Posterior vena cava (tissue), 2 donors: ENCODE measurements at regions of chr20 and their contacts with region 1.

Region 1: DNA sequence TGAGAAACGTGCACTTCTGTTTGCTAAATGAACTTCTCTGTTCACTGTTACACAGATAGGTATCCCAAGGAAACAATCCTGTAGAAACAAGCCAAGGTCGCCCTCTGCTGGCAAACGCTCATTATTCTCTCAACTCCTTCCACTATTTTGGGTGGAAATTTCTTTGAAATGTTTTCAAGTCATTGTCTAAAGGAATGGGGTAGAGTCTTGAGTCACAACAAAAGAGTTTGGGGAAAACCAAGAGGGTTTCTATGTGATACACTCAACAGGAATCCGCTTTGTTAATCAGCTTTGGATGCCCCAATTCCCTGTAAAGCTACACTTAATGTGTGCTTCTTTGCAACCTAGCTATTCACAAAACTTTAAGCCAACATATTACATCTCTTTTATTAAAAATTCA is 4.6 kb upstream of the RAE1 start:
- DNase-seq: peak; percentile 93

Region 2: DNA sequence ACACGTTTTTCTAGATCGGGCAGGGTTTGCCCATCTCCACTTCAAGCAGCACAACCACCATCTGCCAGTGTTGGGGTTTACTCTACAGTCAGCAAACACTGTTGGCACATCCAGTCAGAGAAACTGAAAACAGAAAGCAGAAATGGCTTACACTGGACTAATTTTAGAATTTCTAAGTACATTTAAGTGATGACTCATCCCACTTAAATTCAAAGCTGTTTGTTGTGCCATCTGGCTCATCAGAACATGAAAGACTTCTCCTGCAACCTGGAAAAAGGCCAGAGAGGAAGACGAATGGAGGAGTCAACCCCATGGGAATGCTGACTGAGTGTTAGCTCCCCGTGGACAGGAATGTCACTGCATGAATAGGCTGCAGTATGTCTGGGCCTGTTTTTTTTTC is 791.6 kb before region 1 on chr20:
- intact Hi-C with region 1: loop called in 1 of 2 experiments (anchors 5 kb)
- DNase-seq: no peak

Region 3: GRCh38 chr20:57089691-57090150 is 256.8 kb before region 1 on chr20:
- intact Hi-C with region 1: loop called in 1 of 2 experiments (anchors 5 kb)
- DNase-seq: peak; percentile 85

Region 4: DNA sequence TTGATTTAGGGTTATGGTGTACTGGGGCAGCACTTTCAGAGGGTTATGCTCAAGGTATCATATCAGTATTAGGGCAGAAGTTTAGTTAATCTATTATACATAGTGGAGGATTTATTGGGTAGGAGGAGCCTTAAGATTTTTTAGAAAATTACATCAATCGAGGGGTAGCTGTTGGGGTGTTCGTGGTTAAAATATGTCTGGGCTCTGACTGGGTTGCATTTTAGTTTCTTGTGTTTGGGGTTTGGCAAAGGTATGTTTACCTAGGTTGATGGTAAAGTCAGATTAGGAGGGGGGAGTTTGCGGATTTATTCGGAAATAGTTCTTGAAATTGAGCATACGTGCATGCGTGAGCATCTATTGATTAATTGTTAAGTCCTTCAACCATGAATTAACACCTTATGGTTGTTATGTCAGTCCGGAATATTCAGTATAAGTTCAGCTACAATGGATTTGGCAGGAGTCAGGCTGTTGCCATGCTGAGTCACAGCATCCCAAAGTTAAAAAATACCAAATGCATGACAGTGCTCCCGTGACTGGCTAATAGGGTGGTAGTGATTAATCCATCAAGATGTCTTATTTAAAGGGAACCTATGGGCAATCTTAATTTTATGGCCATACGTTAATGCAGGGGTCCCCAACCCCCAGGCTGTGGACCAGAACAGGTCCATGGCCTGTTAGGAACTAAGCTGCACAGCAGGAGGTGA is 14.9 kb after region 1 on chr20:
- intact Hi-C with region 1: no loop called
- DNase-seq: no peak